Endothelial cell of umbilical vein (primary cell): ENCODE measurements at regions of chr11 and their contacts with region 1.

Region 1: GRCh38 chr11:64304316-64305072 is 830 bp upstream of the ESRRA start:
- DNase-seq: peak; percentile 85
- H3K4me3 ChIP-seq: peak overlapping the region; percentile 14 to 57 (median 39)
- H3K27ac ChIP-seq: peak overlapping the region; percentile 49
- H3K4me1 ChIP-seq: peaks cover 21% of the 10 kb centered on the region
- H3K27me3 ChIP-seq: peaks cover 4 to 11% of the 10 kb centered on the region in 2 experiments
- CTCF ChIP-seq: peak; percentile 91 to 92
- POLR2A ChIP-seq: peak; percentile 35

Region 2: DNA sequence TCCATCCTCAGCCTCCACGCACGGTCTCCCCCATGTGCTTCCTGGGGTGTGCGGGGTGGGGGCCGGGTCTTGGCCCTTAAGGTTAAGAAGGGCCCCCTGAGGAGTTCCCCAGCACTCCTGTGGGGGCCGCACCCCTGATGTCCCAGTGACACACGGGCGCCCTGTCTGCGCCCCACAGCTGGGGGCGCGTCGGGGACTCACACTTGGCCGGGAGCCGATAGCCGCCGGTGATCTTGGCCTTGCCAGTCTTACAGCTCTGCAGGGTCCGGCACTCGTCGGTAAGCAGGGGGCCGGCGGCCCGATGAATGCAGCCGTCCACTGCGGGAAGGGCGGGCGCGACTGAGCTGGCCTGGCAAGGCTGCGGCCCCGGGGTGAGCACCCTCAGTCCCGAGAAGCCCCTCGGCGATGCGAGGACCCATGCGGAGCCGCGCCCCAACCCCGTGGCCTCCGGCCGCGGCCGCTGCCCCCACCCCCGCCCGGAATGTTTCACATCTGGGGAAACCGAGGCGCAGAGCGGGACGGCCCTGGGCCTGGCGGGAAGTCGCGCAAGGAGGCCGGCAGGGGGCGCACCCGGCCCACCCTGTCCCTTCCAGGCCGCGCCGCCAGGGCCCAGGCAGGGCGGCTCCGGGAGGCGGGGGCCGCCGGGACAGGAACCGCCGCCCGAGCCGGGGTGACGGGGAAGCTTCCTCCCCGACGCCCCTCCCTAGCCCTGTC is 304.3 kb before region 1 on chr11:
- CTCF ChIA-PET with region 1: interaction called, 18 read pairs
- POLR2A ChIA-PET with region 1: no interaction called
- dilution Hi-C with region 1: no loop called
- intact Hi-C with region 1: no loop called
- DNase-seq: peak; percentile 53
- H3K4me3 ChIP-seq: peak overlapping the region in 1 of 3 experiments; percentile 13
- H3K27ac ChIP-seq: no peak overlapping the region
- H3K4me1 ChIP-seq: peaks cover 34% of the 10 kb centered on the region
- H3K27me3 ChIP-seq: no peaks in the 10 kb centered on the region
- CTCF ChIP-seq: peak; percentile 68 to 70
- POLR2A ChIP-seq: no peak

Region 3: DNA sequence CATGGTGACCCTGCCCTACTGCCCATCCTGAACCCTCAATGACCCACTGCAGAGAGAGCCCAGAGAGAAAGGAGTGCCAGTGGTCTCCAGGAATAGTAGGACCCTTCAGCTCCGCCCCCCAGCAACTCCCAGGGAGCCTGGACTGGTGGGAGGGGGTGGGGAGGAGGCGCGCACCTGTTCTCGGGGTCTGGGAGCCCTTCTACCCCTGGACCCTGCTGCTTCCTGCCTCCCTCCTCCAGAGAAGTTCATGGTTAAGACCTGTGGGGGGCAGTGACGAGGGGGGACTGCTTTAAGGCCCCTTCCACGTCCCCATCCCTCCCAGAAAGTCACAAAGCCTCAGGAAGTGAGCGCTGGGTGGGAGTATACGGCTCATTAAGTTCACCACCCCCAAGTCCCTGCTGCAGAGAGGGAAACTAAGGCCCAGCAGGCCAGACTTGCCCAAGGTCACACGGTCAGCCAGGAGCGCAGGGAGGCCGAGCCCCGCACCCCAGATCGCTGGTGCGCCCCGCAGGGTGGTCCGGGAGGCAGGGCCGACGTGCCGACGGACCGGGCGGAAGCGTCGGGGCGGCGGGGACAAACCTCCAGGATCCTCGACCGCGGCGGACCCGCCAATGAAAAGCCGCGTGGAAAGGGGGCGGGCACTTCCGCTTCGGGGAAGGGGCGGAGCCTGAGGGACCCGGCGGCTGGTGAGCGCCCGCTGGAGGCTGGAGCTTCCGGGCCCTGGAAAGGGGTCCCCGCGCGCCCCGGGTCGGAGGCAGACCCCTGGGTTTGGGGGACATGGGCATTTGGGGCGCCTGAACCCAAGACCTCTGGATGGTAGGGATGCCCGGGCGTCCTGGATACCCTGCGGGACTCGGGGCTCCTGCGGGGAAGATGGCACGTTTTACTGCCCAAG is 78.6 kb before region 1 on chr11 and contains the starts of genes NUDT22 and TRPT1:
- CTCF ChIA-PET with region 1: interaction called, 14 read pairs
- POLR2A ChIA-PET with region 1: interaction called, 4 read pairs
- dilution Hi-C with region 1: no loop called
- intact Hi-C with region 1: no loop called
- DNase-seq: peak; percentile 83
- H3K4me3 ChIP-seq: peak within 1 kb of the TSS; percentile 62 to 70 (median 66)
- H3K27ac ChIP-seq: peak within 1 kb of the TSS; percentile 55
- H3K4me1 ChIP-seq: peaks cover 14% of the 10 kb centered on the region
- H3K27me3 ChIP-seq: no peaks in the 10 kb centered on the region
- CTCF ChIP-seq: peak; percentile 3 to 13
- POLR2A ChIP-seq: peak; percentile 90
- total RNA-seq, gene NUDT22: 37.1 and 37.8 TPM in 2 replicates
- total RNA-seq, gene TRPT1: 26.2 and 28.0 TPM in 2 replicates

Region 4: DNA sequence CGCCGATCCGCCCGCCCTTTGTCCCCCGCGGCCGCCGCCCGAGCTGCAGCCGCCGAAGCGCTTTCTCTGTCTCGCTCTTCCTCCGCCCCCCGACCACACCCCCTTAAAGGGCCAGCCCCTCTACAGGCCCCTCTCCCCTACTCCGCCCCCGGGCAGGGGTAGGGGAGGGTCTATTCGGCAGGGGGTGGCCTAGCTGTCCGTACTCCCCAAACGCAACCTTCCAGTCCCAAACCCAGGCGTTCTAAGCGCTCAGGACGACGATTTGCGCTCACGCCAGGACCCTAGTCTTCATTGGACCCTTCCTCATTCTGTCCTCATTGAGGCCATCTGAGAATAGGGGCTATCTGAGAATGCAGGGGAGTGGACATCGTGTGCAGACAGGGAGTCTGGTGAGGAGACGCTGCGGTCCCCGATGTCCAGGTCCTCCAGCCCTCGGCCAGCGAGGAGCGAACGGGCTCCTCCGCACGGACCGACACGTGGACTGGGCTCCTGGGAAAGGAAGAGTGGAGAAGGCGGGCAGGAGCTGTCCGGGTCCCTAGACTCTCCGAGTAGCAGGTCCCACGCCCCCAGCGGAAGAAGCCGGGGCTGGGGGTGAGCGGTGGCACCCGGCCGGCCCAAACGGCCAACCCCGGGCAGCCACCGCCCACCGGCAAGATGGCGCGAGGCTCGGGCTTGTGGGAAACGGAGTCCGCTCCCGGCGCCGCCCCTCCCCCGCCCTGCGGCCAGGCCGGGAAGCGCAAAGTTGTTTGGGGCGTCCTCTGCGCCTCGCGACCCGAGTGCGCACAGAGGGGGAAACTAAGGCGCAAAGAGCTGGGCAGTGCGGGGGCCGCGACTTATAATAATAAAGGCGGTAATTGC is 57.4 kb before region 1 on chr11 and contains the start of gene PPP1R14B:
- CTCF ChIA-PET with region 1: interaction called, 36 read pairs
- POLR2A ChIA-PET with region 1: interaction called, 3 read pairs
- dilution Hi-C with region 1: no loop called
- intact Hi-C with region 1: loop called (anchors 1 kb)
- DNase-seq: peak; percentile 80
- H3K4me3 ChIP-seq: peak within 1 kb of the TSS; percentile 67 to 78 (median 75)
- H3K27ac ChIP-seq: peak within 1 kb of the TSS; percentile 47
- H3K4me1 ChIP-seq: peaks cover 28% of the 10 kb centered on the region
- H3K27me3 ChIP-seq: no peaks in the 10 kb centered on the region
- CTCF ChIP-seq: no peak
- POLR2A ChIP-seq: peak; percentile 14
- total RNA-seq, gene PPP1R14B: 431 TPM in 2 replicates

Region 5: DNA sequence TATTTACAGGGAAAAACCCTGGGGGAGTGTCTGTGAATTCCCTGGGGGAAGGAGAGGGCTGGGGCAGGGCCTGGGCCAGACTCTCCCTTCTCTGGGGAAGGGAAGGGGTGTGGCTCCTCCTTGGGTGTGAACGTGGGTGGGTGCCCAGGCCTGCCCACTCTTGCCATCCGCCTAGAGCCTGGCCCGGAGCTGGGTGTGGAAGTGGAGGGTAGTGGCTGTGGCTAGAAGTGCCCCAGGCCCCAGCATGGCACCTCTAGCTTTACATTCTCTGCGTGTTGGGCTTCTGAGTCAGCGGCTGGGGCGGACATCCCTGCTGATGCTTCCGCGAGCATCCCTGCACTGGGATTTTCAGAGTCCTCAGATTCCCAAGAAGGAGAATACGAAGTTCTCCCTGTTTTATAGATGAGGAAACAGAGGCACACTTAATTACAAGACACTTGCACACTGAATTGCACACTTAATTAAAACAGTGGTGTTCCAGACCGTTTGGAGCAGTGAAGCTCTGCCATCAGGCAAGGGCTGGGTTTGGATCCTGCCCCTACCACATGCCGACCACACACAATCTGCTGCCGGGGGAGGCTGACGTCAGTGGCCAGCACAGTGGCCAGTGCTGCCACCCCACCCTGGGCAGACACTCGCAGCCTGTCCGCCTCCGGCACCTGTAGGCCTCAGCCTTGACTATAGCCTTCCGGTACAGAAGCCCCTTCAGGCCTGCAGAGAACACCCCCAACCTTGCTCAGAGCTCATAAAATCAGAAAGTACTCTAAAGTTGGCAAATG is 27.7 kb before region 1 on chr11:
- CTCF ChIA-PET with region 1: interaction called, 76 read pairs
- POLR2A ChIA-PET with region 1: no interaction called
- dilution Hi-C with region 1: no loop called
- intact Hi-C with region 1: no loop called
- DNase-seq: no peak
- H3K4me3 ChIP-seq: no peak overlapping the region
- H3K27ac ChIP-seq: no peak overlapping the region
- H3K4me1 ChIP-seq: peaks cover under 1% of the 10 kb centered on the region
- H3K27me3 ChIP-seq: no peaks in the 10 kb centered on the region
- CTCF ChIP-seq: no peak
- POLR2A ChIP-seq: no peak

Region 6: GRCh38 chr11:64317957-64318693 is 13.6 kb after region 1 on chr11 and contains the start of gene PRDX5:
- CTCF ChIA-PET with region 1: interaction called, 31 read pairs
- POLR2A ChIA-PET with region 1: interaction called, 6 read pairs
- dilution Hi-C with region 1: no loop called
- intact Hi-C with region 1: loop called (anchors 1 kb)
- DNase-seq: peak; percentile 96
- H3K4me3 ChIP-seq: peak within 1 kb of the TSS; percentile 57 to 76 (median 75)
- H3K27ac ChIP-seq: peak within 1 kb of the TSS; percentile 87
- H3K4me1 ChIP-seq: peaks cover 10% of the 10 kb centered on the region
- H3K27me3 ChIP-seq: no peaks in the 10 kb centered on the region
- CTCF ChIP-seq: peak in 1 of 2 donors; percentile 32
- POLR2A ChIP-seq: peak; percentile 64
- total RNA-seq, gene PRDX5: 199 and 202 TPM in 2 replicates